ENCODE measurements at regions of chr10 and their contacts with region 1.

Region 1: DNA sequence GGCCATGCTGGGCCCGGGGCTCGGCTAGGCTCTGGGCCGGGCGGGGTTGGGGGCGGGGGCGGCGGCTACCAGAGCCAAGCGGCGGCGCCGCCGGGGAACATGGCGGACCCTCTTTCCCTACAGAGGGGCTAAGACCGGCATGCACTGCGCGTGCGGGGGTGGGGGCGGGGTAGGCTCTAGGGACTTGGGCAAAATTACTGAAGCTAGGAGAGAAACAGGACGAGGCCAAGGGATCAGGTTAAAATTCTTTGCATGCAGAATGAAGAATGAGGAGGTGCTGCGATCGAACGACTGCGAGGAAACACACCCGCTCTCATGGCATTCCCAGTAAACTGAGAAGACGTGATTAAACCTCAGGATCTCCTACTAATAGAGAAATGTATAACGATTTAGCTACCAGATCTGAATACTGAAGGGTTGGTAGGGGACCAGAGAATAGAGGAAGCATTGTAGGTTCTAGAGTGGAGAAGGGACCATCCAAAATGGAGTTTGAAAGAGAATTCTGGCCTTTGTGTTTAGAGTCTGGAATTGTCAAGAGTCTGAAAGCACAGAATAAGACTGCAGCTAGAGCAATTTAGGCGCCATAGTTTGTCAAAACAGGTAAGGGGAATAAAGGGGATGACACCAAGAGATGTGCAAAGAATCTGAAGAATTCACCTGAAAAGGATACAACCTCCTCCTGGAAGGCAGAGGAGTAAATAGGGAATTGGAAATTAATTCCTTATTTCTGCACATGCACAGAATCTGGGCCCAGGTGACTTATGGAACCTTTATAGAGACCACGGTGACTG is at the start of gene PPP3CB:
- DNase-seq: peak in 6 of 9 donors; percentile 77 to 93 (median 84)
- ATAC-seq: peak; percentile 89
- H3K4me3 ChIP-seq: peak within 1 kb of the TSS; percentile 99
- H3K4me3 Mint-ChIP-seq: peak within 1 kb of the TSS; percentile 84 to 99 (median 90)
- H3K27ac ChIP-seq: peak within 1 kb of the TSS; percentile 91
- H3K27ac Mint-ChIP-seq: peak within 1 kb of the TSS; percentile 83 to 99 (median 93)
- H3K4me1 ChIP-seq: peaks cover 19 to 38% of the 10 kb centered on the region in 2 donors
- H3K4me1 Mint-ChIP-seq: peaks cover 44 to 63% (median 55%) of the 10 kb centered on the region in 7 donors
- H3K27me3 ChIP-seq: no peaks in the 10 kb centered on the region
- H3K27me3 Mint-ChIP-seq: no peaks in the 10 kb centered on the region
- total RNA-seq, gene PPP3CB: 25.7 to 44.5 (median 41.4) TPM

Region 2: DNA sequence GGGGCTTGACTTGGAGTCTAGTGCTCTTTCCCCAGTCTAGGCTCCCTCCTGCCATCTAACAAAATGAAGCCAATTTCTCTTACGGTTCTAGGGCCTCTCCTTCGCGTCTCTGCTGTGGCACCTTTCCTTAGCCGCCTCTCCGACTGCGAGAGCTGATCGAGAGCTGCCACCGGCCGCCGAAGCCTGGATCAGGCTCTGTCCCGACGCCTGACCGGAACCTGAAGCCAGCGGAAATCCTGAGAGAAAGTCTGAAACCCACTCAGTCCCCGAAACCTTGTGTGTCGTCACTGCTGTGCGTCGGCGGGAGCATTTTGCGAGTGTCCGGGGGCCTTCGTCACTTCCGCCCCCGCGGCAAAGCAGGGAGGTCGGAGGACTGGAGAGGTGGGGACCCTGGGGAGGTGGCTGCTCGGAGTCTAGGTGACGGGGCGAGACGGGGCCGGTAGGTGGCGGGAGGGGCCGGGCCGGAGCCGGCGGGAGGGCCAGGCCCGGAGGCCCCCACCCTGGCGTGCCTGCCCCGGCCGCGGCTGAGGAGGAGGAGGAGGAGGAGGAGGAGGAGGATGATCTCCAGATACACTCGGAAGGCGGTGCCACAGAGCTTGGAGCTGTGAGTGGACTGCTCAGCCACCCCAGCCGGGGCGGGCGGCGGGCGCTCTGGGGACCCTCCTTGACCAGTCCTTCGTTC is 328.2 kb before region 1 on chr10 and contains the starts of genes ECD and FAM149B1:
- CTCF ChIA-PET with region 1: no interaction called
- POLR2A ChIA-PET with region 1: no interaction called
- intact Hi-C with region 1: loop called in 1 of 2 experiments (anchors 5 kb)
- DNase-seq: peak; percentile 86 to 93 (median 92)
- ATAC-seq: peak; percentile 97
- H3K4me3 ChIP-seq: peak within 1 kb of the TSS; percentile 97
- H3K4me3 Mint-ChIP-seq: peak within 1 kb of the TSS; percentile 92 to 100 (median 100)
- H3K27ac ChIP-seq: peak within 1 kb of the TSS; percentile 95
- H3K27ac Mint-ChIP-seq: peak within 1 kb of the TSS; percentile 98 to 100 (median 99)
- H3K4me1 ChIP-seq: peaks cover 29 to 33% of the 10 kb centered on the region in 2 donors
- H3K4me1 Mint-ChIP-seq: peaks cover 30 to 56% (median 43%) of the 10 kb centered on the region in 7 donors
- H3K27me3 ChIP-seq: no peaks in the 10 kb centered on the region
- H3K27me3 Mint-ChIP-seq: no peaks in the 10 kb centered on the region
- total RNA-seq, gene ECD: 30.2 to 42.7 (median 33.1) TPM
- total RNA-seq, gene FAM149B1: 13.7 to 21.0 (median 16.3) TPM

Region 3: GRCh38 chr10:73205890-73206289 is 290.2 kb before region 1 on chr10:
- CTCF ChIA-PET with region 1: no interaction called
- POLR2A ChIA-PET with region 1: no interaction called
- intact Hi-C with region 1: no loop called
- DNase-seq: no peak
- ATAC-seq: no peak
- H3K4me3 ChIP-seq: no peak overlapping the region
- H3K4me3 Mint-ChIP-seq: no peak overlapping the region
- H3K27ac ChIP-seq: no peak overlapping the region
- H3K27ac Mint-ChIP-seq: no peak overlapping the region
- H3K4me1 ChIP-seq: no peaks in the 10 kb centered on the region
- H3K4me1 Mint-ChIP-seq: peaks cover 0 to 2% (median 0%) of the 10 kb centered on the region in 7 donors
- H3K27me3 ChIP-seq: no peaks in the 10 kb centered on the region
- H3K27me3 Mint-ChIP-seq: no peaks in the 10 kb centered on the region

Region 4: DNA sequence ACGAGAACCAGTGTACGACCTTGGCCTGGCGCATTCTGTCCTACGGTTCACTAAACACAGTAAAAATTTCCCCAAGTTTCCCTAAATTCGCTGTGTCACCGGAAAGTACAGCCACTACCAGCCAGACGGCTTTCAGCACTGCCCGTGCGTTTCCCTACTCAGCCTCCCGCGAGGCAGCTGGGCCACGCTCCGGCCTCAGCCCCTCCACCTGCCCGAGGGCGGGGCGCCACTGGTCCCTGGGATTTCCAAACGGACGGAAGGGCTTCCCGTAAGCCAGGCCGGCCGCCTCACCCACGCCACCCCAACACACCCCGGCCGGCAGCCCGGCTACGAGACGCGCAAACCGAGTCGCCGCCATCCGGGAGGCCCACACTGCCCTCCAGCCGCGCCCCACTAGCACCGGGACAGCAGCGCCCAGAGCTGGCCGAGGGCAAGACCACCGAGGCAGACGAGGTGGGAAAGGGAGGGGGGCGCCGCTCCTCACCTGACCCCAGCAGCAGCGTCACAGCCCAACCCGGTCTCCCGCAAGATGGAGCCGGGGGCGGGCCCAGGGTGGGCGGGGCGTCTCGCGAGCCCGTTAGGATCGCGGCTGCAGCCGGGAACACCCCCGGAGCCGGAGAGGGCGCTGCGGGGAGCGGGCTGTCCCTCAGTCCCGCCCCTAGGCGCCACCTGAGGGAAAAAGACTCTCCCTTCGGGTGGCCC is 82.4 kb before region 1 on chr10 and contains the start of gene ANXA7:
- CTCF ChIA-PET with region 1: no interaction called
- POLR2A ChIA-PET with region 1: interaction called, 22 read pairs
- intact Hi-C with region 1: loop called (anchors 1 kb)
- DNase-seq: peak; percentile 78 to 93 (median 85)
- ATAC-seq: peak; percentile 99
- H3K4me3 ChIP-seq: peak within 1 kb of the TSS; percentile 78
- H3K4me3 Mint-ChIP-seq: peak within 1 kb of the TSS; percentile 82 to 97 (median 94)
- H3K27ac ChIP-seq: peak within 1 kb of the TSS; percentile 98
- H3K27ac Mint-ChIP-seq: peak within 1 kb of the TSS; percentile 83 to 95 (median 90)
- H3K4me1 ChIP-seq: peaks cover 8 to 16% of the 10 kb centered on the region in 2 donors
- H3K4me1 Mint-ChIP-seq: peaks cover 39 to 60% (median 53%) of the 10 kb centered on the region in 7 donors
- H3K27me3 ChIP-seq: no peaks in the 10 kb centered on the region
- H3K27me3 Mint-ChIP-seq: peaks cover 0 to 4% (median 0%) of the 10 kb centered on the region in 5 donors
- total RNA-seq, gene ANXA7: 74.8 to 118 (median 97.3) TPM

Region 5: GRCh38 chr10:73730153-73730906 is 234.3 kb after region 1 on chr10:
- CTCF ChIA-PET with region 1: no interaction called
- POLR2A ChIA-PET with region 1: interaction called, 10 read pairs
- intact Hi-C with region 1: loop called (anchors 1 kb)
- DNase-seq: peak; percentile 86 to 94 (median 89)
- ATAC-seq: peak; percentile 94
- H3K4me3 ChIP-seq: peak overlapping the region; percentile 99
- H3K4me3 Mint-ChIP-seq: peak overlapping the region; percentile 95 to 100 (median 98)
- H3K27ac ChIP-seq: peak overlapping the region; percentile 82
- H3K27ac Mint-ChIP-seq: peak overlapping the region; percentile 91 to 98 (median 96)
- H3K4me1 ChIP-seq: peaks cover 5 to 10% of the 10 kb centered on the region in 2 donors
- H3K4me1 Mint-ChIP-seq: peaks cover 0 to 32% (median 21%) of the 10 kb centered on the region in 7 donors
- H3K27me3 ChIP-seq: no peaks in the 10 kb centered on the region
- H3K27me3 Mint-ChIP-seq: no peaks in the 10 kb centered on the region

Region 6: GRCh38 chr10:73810735-73811465 is 314.8 kb after region 1 on chr10:
- CTCF ChIA-PET with region 1: no interaction called
- POLR2A ChIA-PET with region 1: interaction called, 4 read pairs
- intact Hi-C with region 1: loop called in 1 of 2 experiments (anchors 5 kb)
- DNase-seq: peak; percentile 46 to 76 (median 71)
- ATAC-seq: peak; percentile 18
- H3K4me3 ChIP-seq: peak overlapping the region; percentile 69
- H3K4me3 Mint-ChIP-seq: peak overlapping the region; percentile 88 to 97 (median 94)
- H3K27ac ChIP-seq: peak overlapping the region; percentile 97
- H3K27ac Mint-ChIP-seq: peak overlapping the region; percentile 94 to 98 (median 96)
- H3K4me1 ChIP-seq: peaks cover 26 to 31% of the 10 kb centered on the region in 2 donors
- H3K4me1 Mint-ChIP-seq: peaks cover 31 to 54% (median 49%) of the 10 kb centered on the region in 7 donors
- H3K27me3 ChIP-seq: no peaks in the 10 kb centered on the region
- H3K27me3 Mint-ChIP-seq: no peaks in the 10 kb centered on the region

Region 7: GRCh38 chr10:75111367-75111906 is 1615.4 kb after region 1 on chr10 and contains the start of gene SAMD8:
- CTCF ChIA-PET with region 1: no interaction called
- POLR2A ChIA-PET with region 1: no interaction called
- intact Hi-C with region 1: loop called in 1 of 2 experiments (anchors 10 kb)
- DNase-seq: peak; percentile 90 to 98 (median 94)
- ATAC-seq: peak; percentile 92
- H3K4me3 ChIP-seq: peak within 1 kb of the TSS; percentile 90
- H3K4me3 Mint-ChIP-seq: peak within 1 kb of the TSS; percentile 81 to 98 (median 90)
- H3K27ac ChIP-seq: peak within 1 kb of the TSS; percentile 89
- H3K27ac Mint-ChIP-seq: peak within 1 kb of the TSS; percentile 86 to 98 (median 94)
- H3K4me1 ChIP-seq: peaks cover 14 to 16% of the 10 kb centered on the region in 2 donors
- H3K4me1 Mint-ChIP-seq: peaks cover 33 to 66% (median 62%) of the 10 kb centered on the region in 7 donors
- H3K27me3 ChIP-seq: no peaks in the 10 kb centered on the region
- H3K27me3 Mint-ChIP-seq: no peaks in the 10 kb centered on the region
- total RNA-seq, gene SAMD8: 14.8 to 31.7 (median 17.5) TPM

Measured in naive thymus-derived CD4-positive, alpha-beta T cell (primary cell).